ENCODE measurements at regions of chr20 and their contacts with region 1.

Region 1: DNA sequence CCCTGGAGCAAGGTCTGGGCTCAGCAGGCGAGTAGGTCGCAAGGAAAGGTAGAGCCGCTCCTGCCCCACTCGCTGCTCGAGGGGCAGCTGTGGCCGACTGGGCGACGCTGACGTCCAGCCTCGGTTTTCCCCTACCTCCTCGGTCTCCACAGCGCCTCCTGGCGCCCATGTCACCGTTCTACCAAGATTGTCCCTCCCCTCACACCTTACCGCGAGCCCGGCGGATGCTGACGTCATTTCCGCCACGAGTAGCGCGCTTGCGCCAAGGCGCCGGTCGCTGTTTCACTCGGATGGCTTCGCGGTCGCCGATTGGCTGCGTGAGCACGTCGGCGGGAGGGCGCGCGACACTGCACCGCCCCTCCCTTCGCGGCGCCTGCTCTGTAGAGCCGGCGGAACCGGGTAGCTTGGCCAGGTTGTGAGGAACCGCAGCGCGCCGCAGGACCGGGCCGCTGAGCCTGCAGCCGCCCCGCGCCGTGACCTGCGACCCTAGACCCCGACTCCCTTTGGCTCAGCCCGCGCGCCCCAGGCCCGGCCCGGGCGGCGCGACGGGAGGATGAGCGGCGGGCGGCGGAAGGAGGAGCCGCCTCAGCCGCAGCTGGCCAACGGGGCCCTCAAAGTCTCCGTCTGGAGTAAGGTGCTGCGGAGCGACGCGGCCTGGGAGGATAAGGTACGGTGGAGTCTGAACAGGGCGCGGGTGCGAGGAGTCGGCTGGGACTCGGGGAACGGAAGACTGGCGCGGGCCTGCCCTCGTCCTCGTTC is at the start of gene RAB5IF:
- DNase-seq: peak; percentile 94 to 99 (median 96)
- H3K4me3 ChIP-seq: peak within 1 kb of the TSS; percentile 68 to 100 (median 98)
- H3K27ac ChIP-seq: peak within 1 kb of the TSS; percentile 73 to 99 (median 90)
- H3K27me3 ChIP-seq: no peaks in the 10 kb centered on the region
- CTCF ChIP-seq: peak; percentile 88 to 100 (median 96)
- total RNA-seq, gene RAB5IF: 26.9 to 62.3 (median 46.7) TPM

Region 2: DNA sequence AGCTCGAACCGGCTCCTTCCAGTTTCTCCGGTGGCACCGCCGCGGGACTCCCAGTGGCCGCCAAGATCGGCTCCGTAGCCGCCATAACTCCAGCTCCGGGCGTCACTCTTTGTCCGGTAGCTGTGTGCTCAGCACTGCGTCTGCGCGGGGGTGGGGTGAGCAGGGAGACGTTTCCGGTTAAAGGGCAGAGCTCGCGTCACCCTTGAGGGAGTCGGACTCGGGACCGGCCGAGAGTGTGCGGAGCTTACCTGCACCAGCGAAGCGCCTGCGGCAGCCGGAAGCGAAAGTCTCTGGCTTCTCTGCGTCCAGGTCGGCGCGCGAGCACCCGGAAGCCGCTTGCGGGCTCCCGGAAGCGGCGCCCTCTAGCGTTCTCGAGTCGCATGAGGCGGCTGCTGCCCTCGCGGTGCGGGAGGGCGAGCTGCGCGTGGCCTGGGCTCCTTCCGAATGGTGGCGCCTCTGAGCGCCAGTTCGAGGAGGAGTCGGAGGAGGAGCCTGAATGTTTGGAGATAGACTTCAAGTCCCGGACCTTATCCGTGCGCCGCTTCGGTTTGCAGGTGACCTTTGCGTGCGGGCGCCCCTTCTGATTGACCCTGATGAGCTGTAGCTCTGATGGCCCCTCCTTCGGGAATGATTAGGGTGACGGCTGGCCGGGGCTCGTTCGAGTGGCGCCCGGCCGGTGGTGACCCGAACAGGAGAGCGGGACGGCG is 651.2 kb before region 1 on chr20 and contains the start of gene SCAND1:
- intact Hi-C with region 1: loop called in 1 of 2 experiments (anchors 10 kb)
- DNase-seq: peak; percentile 87 to 97 (median 95)
- H3K4me3 ChIP-seq: peak within 1 kb of the TSS; percentile 69 to 100 (median 95)
- H3K27ac ChIP-seq: peak within 1 kb of the TSS; percentile 84 to 100 (median 96)
- H3K27me3 ChIP-seq: no peaks in the 10 kb centered on the region
- CTCF ChIP-seq: peak; percentile 88 to 100 (median 99)
- total RNA-seq, gene SCAND1: 20.1 to 63.9 (median 44.4) TPM

Region 3: GRCh38 chr20:36268440-36269342 is 336.9 kb before region 1 on chr20:
- intact Hi-C with region 1: no loop called
- DNase-seq: peak in 7 of 10 donors; percentile 61 to 84 (median 75)
- H3K4me3 ChIP-seq: no peak overlapping the region
- H3K27ac ChIP-seq: peak overlapping the region in 58 of 59 donors; percentile 15 to 90 (median 80)
- H3K27me3 ChIP-seq: no peaks in the 10 kb centered on the region
- CTCF ChIP-seq: no peak

Region 4: GRCh38 chr20:36439040-36439730 is 166.4 kb before region 1 on chr20:
- intact Hi-C with region 1: no loop called
- DNase-seq: peak; percentile 62 to 86 (median 78)
- H3K4me3 ChIP-seq: no peak overlapping the region
- H3K27ac ChIP-seq: no peak overlapping the region
- H3K27me3 ChIP-seq: peaks cover 0 to 2% (median 0%) of the 10 kb centered on the region in 45 donors
- CTCF ChIP-seq: peak; percentile 67 to 96 (median 90)

Region 5: GRCh38 chr20:36460648-36461599 is 144.7 kb before region 1 on chr20:
- intact Hi-C with region 1: loop called (anchors 2 kb)
- DNase-seq: peak; percentile 79 to 91 (median 87)
- H3K4me3 ChIP-seq: peak overlapping the region; percentile 51 to 96 (median 80)
- H3K27ac ChIP-seq: peak overlapping the region; percentile 70 to 99 (median 95)
- H3K27me3 ChIP-seq: no peaks in the 10 kb centered on the region
- CTCF ChIP-seq: peak in 41 of 56 donors; percentile 7 to 54 (median 31)

Region 6: GRCh38 chr20:36550797-36551299 is 54.7 kb before region 1 on chr20:
- intact Hi-C with region 1: loop called (anchors 1 kb)
- DNase-seq: no peak
- H3K4me3 ChIP-seq: no peak overlapping the region
- H3K27ac ChIP-seq: peak overlapping the region in 2 of 59 donors; percentile 5 to 41
- H3K27me3 ChIP-seq: no peaks in the 10 kb centered on the region
- CTCF ChIP-seq: no peak

Region 7: DNA sequence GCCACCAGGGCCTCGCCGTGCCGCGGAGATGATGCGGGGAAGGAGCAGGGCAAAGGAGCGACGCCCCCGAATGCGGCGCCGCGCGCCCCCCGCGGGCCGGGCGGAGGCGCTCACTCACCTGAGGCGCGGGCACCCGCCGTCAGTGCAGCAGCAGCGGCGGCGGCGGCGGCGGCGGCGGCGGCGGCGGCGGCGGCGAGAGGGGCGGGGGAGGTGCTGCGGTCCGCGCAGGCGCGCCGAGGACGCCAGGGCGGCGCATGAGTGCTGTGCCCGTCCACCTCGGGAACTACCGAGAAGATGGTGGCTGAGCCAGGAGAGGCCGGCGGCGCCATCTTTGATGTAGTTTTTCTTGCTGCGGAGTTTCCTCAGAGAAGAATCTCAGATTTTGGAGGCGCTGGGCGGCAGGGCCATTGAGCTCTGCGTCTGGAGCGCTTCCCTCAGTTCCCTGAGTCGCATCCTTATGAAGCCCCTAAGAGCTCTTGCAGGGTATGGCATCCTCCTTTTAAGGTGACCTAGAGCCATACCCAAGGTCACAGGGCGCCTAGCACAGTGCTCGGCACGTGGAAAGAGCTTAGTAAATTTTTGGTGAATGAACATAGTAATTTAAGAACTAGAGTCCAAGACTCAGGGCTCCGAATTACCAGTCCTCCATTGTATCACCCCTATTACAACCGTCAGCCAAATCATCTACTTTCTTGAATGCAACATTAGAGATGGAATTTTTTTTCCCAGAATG is 140.5 kb after region 1 on chr20 and contains the start of gene NDRG3:
- intact Hi-C with region 1: loop called (anchors 5 to 10 kb)
- DNase-seq: peak; percentile 89 to 96 (median 94)
- H3K4me3 ChIP-seq: peak within 1 kb of the TSS; percentile 62 to 93 (median 85)
- H3K27ac ChIP-seq: peak within 1 kb of the TSS; percentile 24 to 97 (median 88)
- H3K27me3 ChIP-seq: no peaks in the 10 kb centered on the region
- CTCF ChIP-seq: peak in 31 of 56 donors; percentile 3 to 55 (median 27)
- total RNA-seq, gene NDRG3: 75.7 to 191 (median 144) TPM